ENCODE measurements at regions of chr11 and their contacts with region 1.

Region 1: DNA sequence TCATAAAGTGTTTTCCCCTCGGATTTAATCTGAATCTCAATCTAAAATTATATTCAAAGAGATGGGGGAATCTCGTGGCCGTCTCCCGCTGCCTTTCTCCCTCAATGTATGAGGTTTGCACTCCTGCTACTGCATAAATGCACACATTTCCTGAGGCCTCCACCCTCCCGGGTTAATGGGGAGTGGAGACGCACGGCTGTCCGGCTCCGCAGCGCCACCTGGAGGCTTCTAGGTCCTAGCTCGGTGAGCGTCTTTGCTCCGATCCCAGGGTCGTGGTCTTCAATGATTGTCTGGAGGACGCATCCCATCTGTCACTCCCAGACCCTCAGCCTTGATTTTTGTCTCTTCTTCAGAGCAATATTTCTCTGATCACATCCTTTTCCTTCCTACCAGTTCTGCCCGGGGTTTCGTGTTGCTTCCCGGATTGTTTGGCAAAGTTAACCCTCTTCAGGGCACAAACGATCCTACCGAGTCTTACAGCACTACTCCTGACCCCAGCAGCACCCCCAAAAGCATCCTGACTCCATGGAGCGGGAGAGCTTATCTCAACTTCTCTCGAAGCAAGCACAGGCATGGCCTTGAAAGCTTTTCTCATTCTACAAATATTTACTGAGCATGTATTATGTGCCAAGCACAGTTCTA is at the start of gene LMO1:
- DNase-seq: peak; percentile 87
- H3K4me3 ChIP-seq: peak within 1 kb of the TSS; percentile 28 to 57 (median 52)
- H3K27ac ChIP-seq: peak within 1 kb of the TSS in 3 of 4 donors; percentile 19 to 63 (median 22)
- H3K4me1 ChIP-seq: peaks cover 0 to 37% (median 31%) of the 10 kb centered on the region in 4 donors
- H3K27me3 ChIP-seq: peaks cover 12 to 46% (median 43%) of the 10 kb centered on the region in 3 donors
- CTCF ChIP-seq: peak; percentile 39 to 85 (median 66)
- EP300 ChIP-seq: no peak
- POLR2A ChIP-seq: no peak
- total RNA-seq, gene LMO1: 0.66 to 1.8 TPM in 2 of 4 donors, not detected in the others

Region 2: GRCh38 chr11:8192016-8192895 is 71.6 kb before region 1 on chr11:
- intact Hi-C with region 1: loop called (anchors 1 kb)
- DNase-seq: no peak
- H3K4me3 ChIP-seq: no peak overlapping the region
- H3K27ac ChIP-seq: no peak overlapping the region
- H3K4me1 ChIP-seq: no peaks in the 10 kb centered on the region
- H3K27me3 ChIP-seq: peaks cover 0 to 7% (median 0%) of the 10 kb centered on the region in 3 donors
- CTCF ChIP-seq: peak; percentile 50 to 76 (median 64)
- EP300 ChIP-seq: no peak
- POLR2A ChIP-seq: no peak

Region 3: GRCh38 chr11:8225589-8226036 is 38.3 kb before region 1 on chr11:
- intact Hi-C with region 1: loop called (anchors 1 kb)
- DNase-seq: peak; percentile 83
- H3K4me3 ChIP-seq: no peak overlapping the region
- H3K27ac ChIP-seq: no peak overlapping the region
- H3K4me1 ChIP-seq: peaks cover 0 to 13% (median 3%) of the 10 kb centered on the region in 4 donors
- H3K27me3 ChIP-seq: no peaks in the 10 kb centered on the region
- CTCF ChIP-seq: peak; percentile 78 to 96 (median 90)
- EP300 ChIP-seq: no peak
- POLR2A ChIP-seq: no peak

Measured in sigmoid colon (tissue), 7 donors.